Right cardiac atrium (tissue), 5 donors: ENCODE measurements at regions of chr17 and their contacts with region 1.

Region 1: DNA sequence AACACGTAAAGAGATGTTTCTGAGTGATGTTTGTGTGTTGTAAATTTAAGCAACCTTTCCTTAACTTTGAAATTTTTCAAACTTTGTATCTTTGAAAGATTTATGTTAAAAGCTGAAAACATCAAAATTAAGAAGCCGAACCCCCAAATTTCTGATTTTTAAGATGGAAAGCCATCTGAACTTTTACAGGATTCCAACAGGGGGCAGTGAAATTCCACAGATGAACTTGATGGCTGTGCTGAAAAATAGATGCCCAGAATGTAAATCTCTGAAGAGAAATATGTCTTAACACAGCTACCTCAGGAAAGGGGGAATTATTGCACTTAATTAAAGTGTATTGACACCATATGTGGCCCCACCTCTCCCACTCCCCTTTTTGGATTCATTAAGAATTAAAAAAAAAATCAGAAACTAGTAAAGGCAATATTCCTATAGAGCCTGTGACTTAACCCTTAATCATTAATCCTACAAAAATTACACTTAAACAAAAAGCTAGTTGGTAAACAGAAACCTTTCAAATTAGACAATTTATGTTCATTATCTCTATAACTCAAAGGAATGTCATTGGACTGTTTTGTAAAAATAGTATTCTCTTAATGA is 597.9 kb downstream of the KCNJ2 start:
- DNase-seq: no peak
- ATAC-seq: no peak
- H3K4me3 ChIP-seq: no peak overlapping the region
- H3K27ac ChIP-seq: no peak overlapping the region
- H3K4me1 ChIP-seq: no peaks in the 10 kb centered on the region
- H3K27me3 ChIP-seq: no peaks in the 10 kb centered on the region

Region 2: GRCh38 chr17:71084219-71084618 is 317.0 kb after region 1 on chr17:
- intact Hi-C with region 1: no loop called
- DNase-seq: peak in 1 of 3 donors; percentile 38
- ATAC-seq: no peak
- H3K4me3 ChIP-seq: no peak overlapping the region
- H3K27ac ChIP-seq: no peak overlapping the region
- H3K4me1 ChIP-seq: no peaks in the 10 kb centered on the region
- H3K27me3 ChIP-seq: no peaks in the 10 kb centered on the region

Region 3: DNA sequence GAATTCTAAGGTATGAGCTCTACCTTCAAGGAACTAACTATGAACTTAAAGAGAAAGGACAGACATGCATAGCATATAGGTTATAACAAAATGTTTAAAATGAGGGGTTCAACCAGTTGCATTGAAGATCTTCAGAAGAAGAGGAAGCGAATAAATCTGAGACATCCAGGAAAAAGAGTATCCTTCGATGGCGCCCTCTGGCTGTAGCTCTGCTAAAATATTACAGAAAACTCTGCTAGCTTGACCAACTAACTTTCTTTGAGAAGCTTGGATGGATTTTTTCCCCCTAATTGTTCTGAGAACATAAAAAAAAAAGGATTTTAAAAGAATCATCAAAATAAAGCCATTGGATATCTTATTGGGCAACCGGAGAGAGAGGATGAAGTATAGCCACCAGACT is 693.7 kb after region 1 on chr17:
- intact Hi-C with region 1: loop called in 1 of 4 experiments (anchors 10 kb)
- DNase-seq: peak in 2 of 3 donors; percentile 16 to 55
- ATAC-seq: no peak
- H3K4me3 ChIP-seq: no peak overlapping the region
- H3K27ac ChIP-seq: no peak overlapping the region
- H3K4me1 ChIP-seq: no peaks in the 10 kb centered on the region
- H3K27me3 ChIP-seq: no peaks in the 10 kb centered on the region